CD8-positive, alpha-beta T cell (primary cell): ENCODE measurements at regions of chr2 and their contacts with region 1.

Region 1: GRCh38 chr2:42652086-42652485 is 83.7 kb downstream of the MTA3 start:
- DNase-seq: peak in 5 of 9 experiments; percentile 34 to 79 (median 53)
- ATAC-seq: peak; percentile 87
- H3K4me3 ChIP-seq: no peak overlapping the region
- H3K4me3 Mint-ChIP-seq: peak overlapping the region; percentile 76
- H3K27ac ChIP-seq: peak overlapping the region; percentile 28 to 49
- H3K27ac Mint-ChIP-seq: peak overlapping the region; percentile 96
- H3K4me1 ChIP-seq: peaks cover 74% of the 10 kb centered on the region
- H3K4me1 Mint-ChIP-seq: peaks cover 64% of the 10 kb centered on the region
- H3K27me3 ChIP-seq: no peaks in the 10 kb centered on the region
- H3K27me3 Mint-ChIP-seq: no peaks in the 10 kb centered on the region
- CTCF ChIP-seq: no peak

Region 2: GRCh38 chr2:42624047-42624446 is 28.0 kb before region 1 on chr2:
- CTCF ChIA-PET with region 1: no interaction called
- POLR2A ChIA-PET with region 1: no interaction called
- intact Hi-C with region 1: no loop called
- DNase-seq: no peak
- ATAC-seq: no peak
- H3K4me3 ChIP-seq: no peak overlapping the region
- H3K4me3 Mint-ChIP-seq: no peak overlapping the region
- H3K27ac ChIP-seq: no peak overlapping the region
- H3K27ac Mint-ChIP-seq: peak overlapping the region; percentile 25
- H3K4me1 ChIP-seq: no peaks in the 10 kb centered on the region
- H3K4me1 Mint-ChIP-seq: no peaks in the 10 kb centered on the region
- H3K27me3 ChIP-seq: no peaks in the 10 kb centered on the region
- H3K27me3 Mint-ChIP-seq: no peaks in the 10 kb centered on the region
- CTCF ChIP-seq: no peak

Region 3: DNA sequence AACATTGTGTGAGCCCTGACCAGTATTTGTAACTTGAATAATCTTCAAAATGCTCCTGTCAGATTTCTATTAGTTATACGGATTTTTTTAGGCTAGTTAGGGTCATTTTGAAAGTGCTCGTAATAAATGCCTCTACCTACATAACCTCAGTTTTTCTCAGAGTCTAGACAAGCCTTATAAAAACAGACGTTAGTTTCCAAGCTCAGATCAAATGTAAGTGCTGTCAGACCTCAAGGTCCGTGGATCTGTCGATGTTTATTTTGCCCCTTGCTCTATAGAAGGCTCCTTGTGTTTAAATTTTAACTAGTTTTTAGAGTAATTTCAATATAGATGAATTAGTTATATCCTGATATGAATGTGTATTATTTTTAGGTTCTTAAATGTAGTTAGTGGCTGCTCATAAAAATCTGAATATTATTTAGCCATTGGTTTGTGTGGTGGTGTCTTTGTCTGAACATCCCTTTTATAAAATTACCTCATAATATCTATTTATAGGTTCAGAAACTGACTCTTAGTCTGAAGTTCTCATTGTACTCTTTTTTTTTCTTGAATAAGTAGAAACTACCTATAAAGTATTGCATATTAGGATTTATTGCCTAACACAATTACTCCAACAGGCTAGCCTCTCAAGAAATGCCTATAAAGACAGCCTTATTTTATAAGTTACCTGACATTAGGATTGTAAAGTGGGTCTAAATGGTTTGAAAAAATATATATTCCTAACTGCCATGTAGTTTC is 12.6 kb before region 1 on chr2:
- CTCF ChIA-PET with region 1: no interaction called
- POLR2A ChIA-PET with region 1: interaction called, 3 read pairs
- intact Hi-C with region 1: loop called in 1 of 2 experiments (anchors 1 kb)
- DNase-seq: no peak
- ATAC-seq: no peak
- H3K4me3 ChIP-seq: no peak overlapping the region
- H3K4me3 Mint-ChIP-seq: peak overlapping the region; percentile 52
- H3K27ac ChIP-seq: no peak overlapping the region
- H3K27ac Mint-ChIP-seq: peak overlapping the region; percentile 62
- H3K4me1 ChIP-seq: peaks cover 6% of the 10 kb centered on the region
- H3K4me1 Mint-ChIP-seq: peaks cover 15% of the 10 kb centered on the region
- H3K27me3 ChIP-seq: no peaks in the 10 kb centered on the region
- H3K27me3 Mint-ChIP-seq: no peaks in the 10 kb centered on the region
- CTCF ChIP-seq: no peak